ENCODE measurements at regions of chr10 and their contacts with region 1.

Region 1: GRCh38 chr10:59181668-59182067 is 5.2 kb downstream of the PHYHIPL start:
- DNase-seq: peak; percentile 51 to 78
- H3K4me3 ChIP-seq: no peak overlapping the region
- H3K4me3 Mint-ChIP-seq: no peak overlapping the region
- H3K27ac Mint-ChIP-seq: no peak overlapping the region
- H3K4me1 ChIP-seq: peaks cover 4% of the 10 kb centered on the region; the same call in 1 of the 2 replicates
- H3K4me1 Mint-ChIP-seq: peaks cover 7% of the 10 kb centered on the region
- H3K27me3 ChIP-seq: no peaks in the 10 kb centered on the region
- H3K27me3 Mint-ChIP-seq: no peaks in the 10 kb centered on the region
- CTCF ChIP-seq: peak; percentile 87 to 89

Region 2: GRCh38 chr10:58414270-58415041 is 767.2 kb before region 1 on chr10:
- CTCF ChIA-PET with region 1: no interaction called
- POLR2A ChIA-PET with region 1: no interaction called
- intact Hi-C with region 1: loop called (anchors 1 kb)
- DNase-seq: peak; percentile 59 to 85
- H3K4me3 ChIP-seq: no peak overlapping the region
- H3K4me3 Mint-ChIP-seq: no peak overlapping the region
- H3K27ac Mint-ChIP-seq: peak overlapping the region; percentile 38
- H3K4me1 ChIP-seq: peaks cover 35% of the 10 kb centered on the region
- H3K4me1 Mint-ChIP-seq: peaks cover 37% of the 10 kb centered on the region
- H3K27me3 ChIP-seq: no peaks in the 10 kb centered on the region
- H3K27me3 Mint-ChIP-seq: no peaks in the 10 kb centered on the region
- CTCF ChIP-seq: peak; percentile 57 to 84

Region 3: GRCh38 chr10:58531084-58531695 is 650.5 kb before region 1 on chr10:
- CTCF ChIA-PET with region 1: no interaction called
- POLR2A ChIA-PET with region 1: no interaction called
- intact Hi-C with region 1: loop called (anchors 1 kb)
- DNase-seq: peak; percentile 82 to 93
- H3K4me3 ChIP-seq: no peak overlapping the region
- H3K4me3 Mint-ChIP-seq: no peak overlapping the region
- H3K27ac Mint-ChIP-seq: peak overlapping the region; percentile 15
- H3K4me1 ChIP-seq: peaks cover 8% of the 10 kb centered on the region; the same call in 1 of the 2 replicates
- H3K4me1 Mint-ChIP-seq: peaks cover 28% of the 10 kb centered on the region
- H3K27me3 ChIP-seq: no peaks in the 10 kb centered on the region
- H3K27me3 Mint-ChIP-seq: no peaks in the 10 kb centered on the region
- CTCF ChIP-seq: peak; percentile 92 to 97

Region 4: DNA sequence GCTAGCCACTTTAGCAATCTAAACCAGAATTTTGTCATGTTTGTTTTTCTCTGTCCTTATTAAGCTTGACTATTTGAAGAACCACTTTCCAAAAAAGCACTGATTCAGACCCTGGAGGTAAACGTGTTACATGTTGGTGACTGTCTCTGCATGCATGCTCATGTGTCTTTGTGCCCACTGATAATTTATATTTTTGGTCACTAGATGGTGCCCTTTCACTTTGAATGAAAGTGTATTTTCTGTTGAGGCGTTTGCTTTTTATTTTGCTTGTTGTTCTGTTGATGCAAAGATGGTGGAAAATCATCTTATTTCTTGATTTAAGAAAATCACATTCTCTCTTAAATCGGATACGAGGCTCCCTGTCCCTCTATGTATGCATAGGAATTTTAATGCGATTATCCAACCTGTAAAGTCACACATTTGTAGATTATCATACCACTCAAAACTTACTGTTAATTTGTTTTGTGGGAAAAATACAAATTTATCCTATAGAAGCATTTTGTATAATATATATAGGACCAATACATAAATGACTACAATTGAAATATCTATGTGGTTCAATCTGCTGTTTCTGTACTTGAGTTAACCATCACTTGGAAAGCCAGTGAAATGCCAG is 399.7 kb before region 1 on chr10:
- CTCF ChIA-PET with region 1: no interaction called
- POLR2A ChIA-PET with region 1: no interaction called
- intact Hi-C with region 1: loop called (anchors 1 kb)
- DNase-seq: peak in 1 of 2 experiments; percentile 78
- H3K4me3 ChIP-seq: no peak overlapping the region
- H3K4me3 Mint-ChIP-seq: no peak overlapping the region
- H3K27ac Mint-ChIP-seq: peak overlapping the region; percentile 60
- H3K4me1 ChIP-seq: peaks cover 31% of the 10 kb centered on the region
- H3K4me1 Mint-ChIP-seq: peaks cover 38% of the 10 kb centered on the region
- H3K27me3 ChIP-seq: no peaks in the 10 kb centered on the region
- H3K27me3 Mint-ChIP-seq: no peaks in the 10 kb centered on the region
- CTCF ChIP-seq: peak; percentile 71 to 83

Region 5: DNA sequence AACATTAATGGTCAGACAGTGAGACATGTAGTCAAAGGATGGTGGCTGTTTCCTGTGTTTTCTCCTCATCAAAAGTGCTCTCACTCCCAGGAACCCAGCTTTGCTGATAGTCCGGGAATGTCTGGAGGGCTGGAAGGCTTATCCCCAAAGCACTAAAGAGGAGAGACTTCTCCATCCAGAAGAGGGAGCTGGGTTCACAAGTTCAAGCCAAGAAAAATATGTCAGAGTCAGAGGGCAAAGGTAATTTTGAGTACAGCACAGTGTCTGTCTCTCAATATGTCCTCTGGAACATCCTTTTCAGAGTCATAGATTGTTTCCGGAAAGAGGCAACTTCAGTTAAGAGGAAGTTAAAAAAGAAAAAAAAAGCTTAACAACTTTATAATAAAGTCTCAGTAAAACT is 286.7 kb before region 1 on chr10:
- CTCF ChIA-PET with region 1: no interaction called
- POLR2A ChIA-PET with region 1: no interaction called
- intact Hi-C with region 1: loop called (anchors 2 kb)
- DNase-seq: peak; percentile 64 to 68
- H3K4me3 ChIP-seq: no peak overlapping the region
- H3K4me3 Mint-ChIP-seq: no peak overlapping the region
- H3K27ac Mint-ChIP-seq: peak overlapping the region; percentile 40
- H3K4me1 ChIP-seq: peaks cover 27% of the 10 kb centered on the region
- H3K4me1 Mint-ChIP-seq: peaks cover 13% of the 10 kb centered on the region
- H3K27me3 ChIP-seq: no peaks in the 10 kb centered on the region
- H3K27me3 Mint-ChIP-seq: no peaks in the 10 kb centered on the region
- CTCF ChIP-seq: peak in 1 of 2 experiments; percentile 59

Region 6: DNA sequence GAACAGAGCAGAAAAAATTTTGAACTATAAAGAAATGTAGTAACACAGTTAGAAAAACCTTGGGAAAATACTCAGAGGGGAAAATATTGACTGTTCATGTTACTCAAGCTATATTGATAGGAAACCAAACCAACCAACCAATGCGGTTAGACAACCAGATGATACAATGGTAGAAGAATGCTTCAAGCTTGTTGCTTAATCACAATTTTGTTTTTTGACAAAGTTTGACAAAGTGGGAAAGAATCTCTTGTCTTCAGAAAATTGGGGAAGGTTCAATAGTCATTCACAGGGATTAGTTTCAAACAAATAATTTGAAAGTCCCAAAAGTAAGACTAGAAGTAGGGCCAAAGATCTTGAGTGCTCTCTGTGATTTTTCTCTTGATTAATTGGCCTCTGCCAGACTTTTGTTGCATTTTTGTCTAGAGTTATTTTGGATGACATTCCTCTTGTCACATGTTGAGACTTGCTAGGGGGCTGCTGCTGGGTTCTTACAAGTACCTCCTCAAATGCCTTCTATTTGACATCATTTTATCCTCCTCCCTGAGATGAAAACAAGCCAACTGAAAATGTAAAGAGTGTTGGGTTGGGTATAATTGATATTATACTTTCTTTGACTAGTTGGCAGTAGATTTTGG is 238.3 kb before region 1 on chr10:
- CTCF ChIA-PET with region 1: no interaction called
- POLR2A ChIA-PET with region 1: no interaction called
- intact Hi-C with region 1: no loop called
- DNase-seq: no peak
- H3K4me3 ChIP-seq: no peak overlapping the region
- H3K4me3 Mint-ChIP-seq: no peak overlapping the region
- H3K27ac Mint-ChIP-seq: no peak overlapping the region
- H3K4me1 ChIP-seq: no peaks in the 10 kb centered on the region
- H3K4me1 Mint-ChIP-seq: no peaks in the 10 kb centered on the region
- H3K27me3 ChIP-seq: no peaks in the 10 kb centered on the region
- H3K27me3 Mint-ChIP-seq: no peaks in the 10 kb centered on the region
- CTCF ChIP-seq: no peak

Region 7: GRCh38 chr10:58993480-58994221 is 188.0 kb before region 1 on chr10:
- CTCF ChIA-PET with region 1: interaction called, 3 read pairs
- POLR2A ChIA-PET with region 1: no interaction called
- intact Hi-C with region 1: loop called (anchors 1 kb)
- DNase-seq: no peak
- H3K4me3 ChIP-seq: no peak overlapping the region
- H3K4me3 Mint-ChIP-seq: peak overlapping the region; percentile 54
- H3K27ac Mint-ChIP-seq: peak overlapping the region; percentile 32
- H3K4me1 ChIP-seq: peaks cover 49% of the 10 kb centered on the region
- H3K4me1 Mint-ChIP-seq: peaks cover 38% of the 10 kb centered on the region
- H3K27me3 ChIP-seq: no peaks in the 10 kb centered on the region
- H3K27me3 Mint-ChIP-seq: no peaks in the 10 kb centered on the region
- CTCF ChIP-seq: no peak

Region 8: DNA sequence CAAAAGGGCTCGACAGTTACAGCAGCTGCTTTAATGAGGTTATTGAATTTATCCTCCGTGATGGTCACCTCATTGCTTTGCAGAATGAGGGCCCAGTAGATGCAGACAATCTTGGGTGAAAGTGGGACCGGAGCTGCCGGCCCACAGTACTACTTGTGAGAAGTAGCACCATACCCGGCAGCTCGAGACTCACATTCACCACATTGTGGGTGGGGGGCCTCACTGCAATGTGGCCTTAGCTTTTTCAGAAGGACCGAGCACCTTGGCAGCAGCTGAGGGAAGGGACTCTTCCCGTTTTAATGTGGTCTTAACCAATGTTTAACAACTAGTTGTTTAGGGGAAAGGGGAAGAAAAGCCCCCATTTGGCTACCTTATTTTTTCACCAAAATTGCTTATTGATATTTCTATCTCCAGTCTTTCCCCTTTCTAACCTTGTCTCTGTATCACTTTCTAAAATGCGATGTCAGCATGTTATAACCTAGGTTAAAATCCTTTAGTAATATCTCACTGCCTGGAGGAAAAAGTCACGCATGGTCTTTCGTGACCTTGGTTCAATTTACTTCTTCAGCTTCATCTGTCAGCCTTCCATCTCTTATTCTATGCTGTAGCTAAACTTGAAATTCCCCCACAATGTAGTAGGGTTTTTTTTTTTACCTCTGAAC is 92.6 kb before region 1 on chr10:
- CTCF ChIA-PET with region 1: no interaction called
- POLR2A ChIA-PET with region 1: interaction called, 10 read pairs
- intact Hi-C with region 1: no loop called
- DNase-seq: no peak
- H3K4me3 ChIP-seq: no peak overlapping the region
- H3K4me3 Mint-ChIP-seq: no peak overlapping the region
- H3K27ac Mint-ChIP-seq: no peak overlapping the region
- H3K4me1 ChIP-seq: no peaks in the 10 kb centered on the region
- H3K4me1 Mint-ChIP-seq: no peaks in the 10 kb centered on the region
- H3K27me3 ChIP-seq: no peaks in the 10 kb centered on the region
- H3K27me3 Mint-ChIP-seq: no peaks in the 10 kb centered on the region
- CTCF ChIP-seq: no peak

Region 9: DNA sequence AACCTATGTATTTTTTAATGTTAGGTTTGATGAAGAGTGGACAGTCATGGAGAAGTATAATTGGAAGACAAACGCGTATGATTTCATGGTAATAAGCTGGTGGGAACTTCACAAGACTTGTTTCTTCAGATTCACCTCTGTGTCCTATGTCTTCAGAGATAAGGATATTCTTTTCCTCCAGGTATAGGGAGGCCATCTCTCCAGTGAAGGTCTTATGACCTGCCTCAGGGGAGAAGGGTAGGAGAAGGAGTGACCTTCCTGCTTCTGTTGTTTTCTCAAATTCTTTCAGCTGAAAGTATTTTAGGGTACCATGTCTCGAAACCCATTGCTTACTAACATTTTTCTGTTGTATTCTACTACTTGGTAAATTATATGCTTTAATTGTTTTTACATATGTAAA is 13.7 kb after region 1 on chr10:
- CTCF ChIA-PET with region 1: no interaction called
- POLR2A ChIA-PET with region 1: no interaction called
- intact Hi-C with region 1: no loop called
- DNase-seq: no peak
- H3K4me3 ChIP-seq: no peak overlapping the region
- H3K4me3 Mint-ChIP-seq: no peak overlapping the region
- H3K27ac Mint-ChIP-seq: no peak overlapping the region
- H3K4me1 ChIP-seq: no peaks in the 10 kb centered on the region
- H3K4me1 Mint-ChIP-seq: peaks cover 6% of the 10 kb centered on the region
- H3K27me3 ChIP-seq: no peaks in the 10 kb centered on the region
- H3K27me3 Mint-ChIP-seq: no peaks in the 10 kb centered on the region
- CTCF ChIP-seq: no peak

Region 10: DNA sequence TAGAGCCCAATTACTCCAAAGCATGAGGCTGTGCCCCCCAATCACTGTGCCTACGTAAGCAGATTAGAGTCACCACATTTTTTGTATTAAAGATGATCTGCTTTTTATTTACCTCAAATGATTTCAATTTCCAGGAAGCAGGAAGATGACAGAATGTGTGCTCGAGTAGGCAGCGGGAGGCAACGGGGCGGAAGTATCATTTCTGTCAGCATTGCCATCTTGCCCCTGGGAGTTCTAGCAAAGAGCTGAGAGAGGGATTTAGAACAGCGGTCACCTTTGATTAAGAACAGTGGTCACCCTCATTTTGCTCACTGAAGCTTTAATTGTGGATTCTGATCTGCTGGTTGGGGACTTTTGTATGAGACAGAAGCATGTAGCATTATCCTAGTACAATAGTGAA is 297.8 kb after region 1 on chr10:
- CTCF ChIA-PET with region 1: no interaction called
- POLR2A ChIA-PET with region 1: no interaction called
- intact Hi-C with region 1: no loop called
- DNase-seq: no peak
- H3K4me3 ChIP-seq: no peak overlapping the region
- H3K4me3 Mint-ChIP-seq: no peak overlapping the region
- H3K27ac Mint-ChIP-seq: no peak overlapping the region
- H3K4me1 ChIP-seq: no peaks in the 10 kb centered on the region
- H3K4me1 Mint-ChIP-seq: no peaks in the 10 kb centered on the region
- H3K27me3 ChIP-seq: 0 out of 2 replicates have a peak, but pooled peaks cover 2% of the 10 kb centered on the region
- H3K27me3 Mint-ChIP-seq: peaks cover 30% of the 10 kb centered on the region
- CTCF ChIP-seq: no peak

Measured in Caco-2 (cell line).